ENCODE measurements at regions of chr10 and their contacts with region 1.

Region 1: GRCh38 chr10:84537447-84537931 is 209.1 kb downstream of the CCSER2 start:
- DNase-seq: no peak
- H3K4me3 ChIP-seq: no peak overlapping the region
- H3K27ac ChIP-seq: no peak overlapping the region
- H3K4me1 ChIP-seq: peaks cover 2 to 8% (median 3%) of the 10 kb centered on the region in 4 experiments; a peak in 5 of 7 replicates
- H3K27me3 ChIP-seq: peaks cover 0 to 4% (median 0%) of the 10 kb centered on the region in 4 experiments; a peak in 3 of 7 replicates
- CTCF ChIP-seq: peak; percentile 12 to 81 (median 43)
- EP300 ChIP-seq: no peak
- POLR2A ChIP-seq: no peak
- RAD21 ChIP-seq: peak; percentile 92

Region 2: GRCh38 chr10:84333864-84334451 is 203.5 kb before region 1 on chr10:
- CTCF ChIA-PET with region 1: interaction called, 11 read pairs
- POLR2A ChIA-PET with region 1: no interaction called
- DNase-seq: no peak
- H3K4me3 ChIP-seq: no peak overlapping the region
- H3K27ac ChIP-seq: no peak overlapping the region
- H3K4me1 ChIP-seq: peaks cover 0 to 11% (median 8%) of the 10 kb centered on the region in 4 experiments; a peak in 3 of 7 replicates
- H3K27me3 ChIP-seq: no peaks in the 10 kb centered on the region
- CTCF ChIP-seq: no peak
- EP300 ChIP-seq: no peak
- POLR2A ChIP-seq: no peak
- RAD21 ChIP-seq: no peak

Region 3: GRCh38 chr10:84360637-84361365 is 176.7 kb before region 1 on chr10:
- CTCF ChIA-PET with region 1: interaction called, 53 read pairs
- POLR2A ChIA-PET with region 1: no interaction called
- DNase-seq: no peak
- H3K4me3 ChIP-seq: no peak overlapping the region
- H3K27ac ChIP-seq: no peak overlapping the region
- H3K4me1 ChIP-seq: peaks cover 0 to 5% (median 2%) of the 10 kb centered on the region in 4 experiments; a peak in 2 of 7 replicates
- H3K27me3 ChIP-seq: no peaks in the 10 kb centered on the region
- CTCF ChIP-seq: no peak
- EP300 ChIP-seq: no peak
- POLR2A ChIP-seq: no peak
- RAD21 ChIP-seq: no peak

Region 4: GRCh38 chr10:84424731-84425167 is 112.7 kb before region 1 on chr10:
- CTCF ChIA-PET with region 1: interaction called, 70 read pairs
- POLR2A ChIA-PET with region 1: no interaction called
- DNase-seq: no peak
- H3K4me3 ChIP-seq: no peak overlapping the region
- H3K27ac ChIP-seq: no peak overlapping the region
- H3K4me1 ChIP-seq: peaks cover 0 to 3% (median 1%) of the 10 kb centered on the region in 4 experiments; a peak in 2 of 7 replicates
- H3K27me3 ChIP-seq: no peaks in the 10 kb centered on the region
- CTCF ChIP-seq: no peak
- EP300 ChIP-seq: no peak
- POLR2A ChIP-seq: no peak
- RAD21 ChIP-seq: no peak

Region 5: DNA sequence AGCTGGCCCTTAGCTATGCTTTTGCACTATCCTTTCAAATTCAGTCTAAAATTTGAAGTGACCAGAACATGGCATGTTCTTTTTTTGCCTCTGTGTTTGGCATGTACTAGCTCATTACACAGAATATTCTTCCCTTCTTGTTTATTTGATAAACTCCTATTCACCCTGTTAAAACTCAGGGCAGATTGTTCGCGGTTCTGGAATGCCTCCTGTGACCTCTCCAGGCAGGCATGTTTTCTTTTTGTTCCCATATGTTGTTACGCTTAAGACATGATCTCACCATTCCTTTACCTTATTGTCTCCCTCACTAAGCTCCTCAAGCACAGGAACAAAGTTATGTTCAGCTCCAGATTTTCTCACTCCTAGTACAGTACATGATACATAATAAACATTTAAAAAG is 27.4 kb before region 1 on chr10:
- CTCF ChIA-PET with region 1: interaction called, 14 read pairs
- POLR2A ChIA-PET with region 1: no interaction called
- DNase-seq: no peak
- H3K4me3 ChIP-seq: no peak overlapping the region
- H3K27ac ChIP-seq: no peak overlapping the region
- H3K4me1 ChIP-seq: peaks cover 0 to 3% (median 0%) of the 10 kb centered on the region in 4 experiments; a peak in 1 of 7 replicates
- H3K27me3 ChIP-seq: no peaks in the 10 kb centered on the region
- CTCF ChIP-seq: no peak
- EP300 ChIP-seq: no peak
- POLR2A ChIP-seq: no peak
- RAD21 ChIP-seq: no peak

Region 6: DNA sequence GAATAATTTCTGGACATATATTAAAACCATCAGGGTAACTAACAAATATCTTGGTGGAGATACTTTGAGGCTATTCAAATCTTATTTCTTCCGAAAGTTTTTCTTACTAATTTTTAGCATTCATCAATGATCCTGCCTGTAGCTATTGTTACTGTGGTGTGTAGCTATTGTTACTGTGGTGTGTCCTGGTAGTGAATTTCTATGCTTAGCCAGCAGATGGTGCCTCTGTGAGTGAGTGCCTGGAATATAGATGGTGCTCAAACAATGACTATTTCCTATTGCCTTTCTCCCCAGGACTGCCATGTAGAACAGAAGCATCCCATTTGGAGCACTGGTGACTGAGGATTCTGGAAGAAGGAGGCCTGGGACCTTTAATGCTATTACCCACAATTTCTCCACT is 36.6 kb after region 1 on chr10:
- CTCF ChIA-PET with region 1: interaction called, 17 read pairs
- POLR2A ChIA-PET with region 1: no interaction called
- DNase-seq: no peak
- H3K4me3 ChIP-seq: no peak overlapping the region
- H3K27ac ChIP-seq: no peak overlapping the region
- H3K4me1 ChIP-seq: no peaks in the 10 kb centered on the region; a peak in 1 of 7 replicates
- H3K27me3 ChIP-seq: no peaks in the 10 kb centered on the region
- CTCF ChIP-seq: peak in 2 of 3 experiments; percentile 49 to 60; a peak in 3 of 4 replicates
- EP300 ChIP-seq: no peak
- POLR2A ChIP-seq: no peak
- RAD21 ChIP-seq: peak; percentile 38 to 46

Region 7: GRCh38 chr10:84613336-84614021 is 76.0 kb after region 1 on chr10:
- CTCF ChIA-PET with region 1: interaction called, 140 read pairs
- POLR2A ChIA-PET with region 1: no interaction called
- DNase-seq: peak; percentile 64 to 75
- H3K4me3 ChIP-seq: peak overlapping the region in 2 of 4 experiments; percentile 5 to 37; a peak in 2 of 8 replicates
- H3K27ac ChIP-seq: no peak overlapping the region
- H3K4me1 ChIP-seq: peaks cover 0 to 6% (median 3%) of the 10 kb centered on the region in 4 experiments; a peak in 4 of 7 replicates
- H3K27me3 ChIP-seq: no peaks in the 10 kb centered on the region; a peak in 1 of 7 replicates
- CTCF ChIP-seq: peak; percentile 67 to 87 (median 76)
- EP300 ChIP-seq: no peak
- POLR2A ChIP-seq: no peak
- RAD21 ChIP-seq: peak; percentile 90 to 91

Measured in H1 (cell line).